AG04449 (cell line): ENCODE measurements at regions of chr11 and their contacts with region 1.

Region 1: GRCh38 chr11:47552566-47553416 is at the start of gene CELF1:
- DNase-seq: no peak
- H3K4me3 ChIP-seq: peak within 1 kb of the TSS; percentile 98
- CTCF ChIP-seq: peak; percentile 82

Region 2: DNA sequence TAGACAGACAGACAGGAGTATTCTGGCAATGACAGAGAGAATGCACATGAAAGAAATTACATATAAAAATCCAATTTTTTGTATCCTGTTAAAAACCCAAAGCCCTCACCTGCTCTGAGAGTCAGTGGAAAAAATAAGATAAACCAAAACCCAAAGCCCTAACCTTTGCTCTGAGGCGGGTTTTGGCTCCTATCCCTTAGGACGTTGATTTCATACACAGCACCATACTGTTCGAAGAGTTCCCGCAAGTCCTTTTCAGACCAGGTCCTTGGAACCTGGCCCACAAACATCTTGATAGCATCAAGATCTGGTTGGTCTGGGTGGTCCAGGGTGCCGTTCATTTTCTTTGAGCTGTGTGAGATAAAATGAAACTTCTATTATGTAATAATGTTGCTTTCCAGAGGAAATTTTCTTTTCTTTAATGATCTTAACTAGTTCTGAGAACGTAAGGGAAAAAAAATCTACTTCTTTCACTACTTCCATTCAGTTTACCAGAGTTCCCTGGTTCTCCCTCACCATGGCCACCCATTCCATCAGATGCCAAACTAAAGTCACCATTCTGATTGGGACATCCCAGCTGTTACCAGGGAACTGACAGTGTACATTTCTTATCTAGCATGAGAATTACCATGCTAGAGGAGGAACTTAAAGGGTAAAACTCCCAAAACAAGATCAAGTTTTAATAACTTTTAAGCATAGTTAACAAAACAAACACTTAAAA is 64.0 kb before region 1 on chr11:
- CTCF ChIA-PET with region 1: interaction called, 10 read pairs
- POLR2A ChIA-PET with region 1: no interaction called
- DNase-seq: no peak
- H3K4me3 ChIP-seq: no peak overlapping the region
- CTCF ChIP-seq: no peak

Region 3: DNA sequence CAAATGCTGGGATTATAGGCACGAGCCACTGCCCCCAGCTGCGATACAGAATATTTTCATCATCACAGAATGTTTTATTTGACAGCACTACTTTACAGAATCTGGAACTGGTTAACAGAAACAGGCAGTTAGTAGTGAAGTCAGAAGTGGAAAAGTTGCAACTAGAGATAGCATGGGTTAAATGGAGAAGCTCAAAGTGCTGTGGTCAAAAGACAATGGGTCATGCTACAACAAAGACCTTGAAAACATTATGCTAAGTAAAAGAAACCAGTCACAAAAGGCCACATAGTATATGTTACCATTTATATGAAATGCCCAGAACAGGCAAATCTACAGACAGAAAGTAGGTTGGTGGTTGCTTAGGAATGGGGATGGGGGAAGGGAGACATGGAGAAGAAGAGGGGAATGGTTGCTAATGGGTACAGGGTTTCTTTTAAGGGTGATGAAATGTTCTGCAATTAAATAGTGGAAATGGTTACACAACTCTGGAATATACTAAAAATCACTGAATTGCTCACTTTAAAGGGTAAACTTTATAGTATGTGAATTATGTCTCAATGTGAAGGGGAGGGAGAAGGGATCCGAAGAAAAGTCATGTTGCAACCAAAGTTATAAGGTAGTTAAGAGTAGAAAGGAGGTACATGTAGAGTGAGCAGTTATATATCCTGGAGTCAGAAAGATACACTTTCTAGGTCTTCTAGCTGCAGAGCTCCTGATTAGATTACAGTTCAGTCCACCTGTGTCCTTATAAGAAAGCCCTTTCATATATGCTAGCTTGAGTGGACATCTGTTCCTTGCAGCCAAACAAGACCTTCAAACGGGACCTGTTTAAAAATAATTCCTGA is 57.6 kb before region 1 on chr11:
- CTCF ChIA-PET with region 1: interaction called, 14 read pairs
- POLR2A ChIA-PET with region 1: no interaction called
- DNase-seq: peak; percentile 56
- H3K4me3 ChIP-seq: no peak overlapping the region
- CTCF ChIP-seq: no peak

Region 4: DNA sequence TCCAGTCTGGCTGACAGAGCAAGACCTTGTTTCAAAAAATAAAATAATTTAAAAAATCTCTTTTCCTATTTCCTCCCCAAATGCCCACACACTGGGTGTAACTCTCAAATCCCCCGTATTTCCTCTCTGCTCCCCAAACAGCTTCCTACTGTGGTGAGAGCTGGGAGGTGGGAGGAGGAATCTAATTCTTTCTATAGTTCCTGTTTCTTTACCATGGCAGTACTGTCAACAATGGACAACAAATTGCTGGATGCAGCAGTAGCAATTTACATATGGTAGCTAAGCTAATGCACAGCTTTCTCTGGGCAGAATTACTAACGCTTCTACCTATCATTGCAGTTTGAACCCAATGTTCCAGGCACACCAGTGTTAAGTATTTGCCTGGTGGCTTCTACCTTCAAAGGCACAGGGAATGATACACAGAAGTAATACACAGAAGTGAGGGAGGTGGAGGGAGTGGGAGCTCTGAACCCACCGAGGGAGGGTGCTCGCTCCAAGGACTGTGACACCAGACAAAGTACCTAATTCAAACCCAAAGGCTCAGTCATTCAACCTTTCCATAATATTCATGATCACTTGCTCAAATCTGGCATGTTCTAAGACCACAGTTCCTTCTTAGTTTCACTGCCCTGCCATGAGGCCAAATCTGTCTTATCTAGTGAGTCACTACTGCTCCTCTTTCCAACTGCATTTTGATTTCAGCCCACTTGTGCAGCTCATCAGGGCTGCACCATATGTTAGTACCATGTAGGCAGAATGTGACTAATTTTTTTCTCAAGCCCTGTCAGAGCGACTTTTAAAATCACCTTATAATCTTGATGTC is 37.8 kb before region 1 on chr11:
- CTCF ChIA-PET with region 1: interaction called, 14 read pairs
- POLR2A ChIA-PET with region 1: interaction called, 3 read pairs
- DNase-seq: no peak
- H3K4me3 ChIP-seq: no peak overlapping the region
- CTCF ChIP-seq: no peak

Region 5: DNA sequence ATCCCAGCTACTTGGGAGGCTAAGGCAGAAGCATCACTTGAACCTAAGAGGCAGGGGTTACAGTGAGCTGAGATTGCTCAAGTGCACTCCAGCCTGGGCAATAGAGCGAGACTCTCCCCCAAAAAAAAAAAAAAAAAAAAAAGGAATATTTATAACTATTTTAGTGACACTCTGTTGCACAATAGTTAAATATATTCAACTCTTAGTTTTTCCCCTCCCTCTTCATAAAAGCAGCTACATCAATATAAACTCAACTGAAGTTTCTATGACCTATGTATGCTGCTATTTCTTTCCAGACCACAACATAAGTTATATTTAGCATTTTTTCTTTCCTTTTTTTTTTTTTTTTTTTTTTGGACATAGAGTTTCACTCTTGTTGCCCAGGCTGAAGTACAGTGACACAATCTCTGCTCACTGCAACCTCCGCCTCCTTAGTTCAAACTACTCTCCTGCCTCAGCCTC is 19.1 kb before region 1 on chr11:
- CTCF ChIA-PET with region 1: interaction called, 49 read pairs
- POLR2A ChIA-PET with region 1: interaction called, 3 read pairs
- DNase-seq: peak; percentile 68
- H3K4me3 ChIP-seq: no peak overlapping the region
- CTCF ChIP-seq: no peak

Region 6: GRCh38 chr11:47538741-47539574 is 13.8 kb before region 1 on chr11:
- CTCF ChIA-PET with region 1: interaction called, 49 read pairs
- POLR2A ChIA-PET with region 1: interaction called, 5 read pairs
- DNase-seq: no peak
- H3K4me3 ChIP-seq: no peak overlapping the region
- CTCF ChIP-seq: no peak

Region 7: GRCh38 chr11:47565340-47566148 is 12.8 kb after region 1 on chr11 and contains the start of gene PTPMT1:
- CTCF ChIA-PET with region 1: interaction called, 95 read pairs
- POLR2A ChIA-PET with region 1: interaction called, 5 read pairs
- DNase-seq: no peak
- H3K4me3 ChIP-seq: peak within 1 kb of the TSS; percentile 74
- CTCF ChIP-seq: no peak